ENCODE measurements at regions of chr5 and their contacts with region 1.

Region 1: DNA sequence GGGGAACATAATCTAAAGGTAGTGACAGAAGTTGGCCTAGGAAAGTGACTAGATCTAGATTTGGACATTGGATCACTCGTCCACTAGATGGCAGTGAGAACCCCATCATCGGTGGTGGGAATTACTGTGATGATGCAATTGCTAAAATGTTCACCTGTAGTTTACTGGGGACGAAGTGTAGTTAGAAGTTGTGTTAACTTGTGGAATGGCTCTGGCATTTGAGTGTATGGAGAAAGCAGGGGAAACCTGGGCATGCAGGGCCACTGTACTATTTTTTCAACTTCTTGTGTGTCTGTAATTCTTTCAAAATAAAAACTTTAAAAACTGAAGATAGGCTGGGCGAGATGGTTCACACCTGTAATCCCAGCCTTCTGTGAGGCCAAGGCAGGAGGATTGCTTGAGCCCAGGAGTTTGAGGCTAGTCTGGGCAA is 75.5 kb downstream of the PHAX start:
- DNase-seq: peak; percentile 72
- H3K4me3 ChIP-seq: no peak overlapping the region
- H3K27ac ChIP-seq: no peak overlapping the region
- H3K4me1 ChIP-seq: peaks cover 14% of the 10 kb centered on the region
- H3K27me3 ChIP-seq: no peaks in the 10 kb centered on the region
- CTCF ChIP-seq: peak; percentile 87

Region 2: DNA sequence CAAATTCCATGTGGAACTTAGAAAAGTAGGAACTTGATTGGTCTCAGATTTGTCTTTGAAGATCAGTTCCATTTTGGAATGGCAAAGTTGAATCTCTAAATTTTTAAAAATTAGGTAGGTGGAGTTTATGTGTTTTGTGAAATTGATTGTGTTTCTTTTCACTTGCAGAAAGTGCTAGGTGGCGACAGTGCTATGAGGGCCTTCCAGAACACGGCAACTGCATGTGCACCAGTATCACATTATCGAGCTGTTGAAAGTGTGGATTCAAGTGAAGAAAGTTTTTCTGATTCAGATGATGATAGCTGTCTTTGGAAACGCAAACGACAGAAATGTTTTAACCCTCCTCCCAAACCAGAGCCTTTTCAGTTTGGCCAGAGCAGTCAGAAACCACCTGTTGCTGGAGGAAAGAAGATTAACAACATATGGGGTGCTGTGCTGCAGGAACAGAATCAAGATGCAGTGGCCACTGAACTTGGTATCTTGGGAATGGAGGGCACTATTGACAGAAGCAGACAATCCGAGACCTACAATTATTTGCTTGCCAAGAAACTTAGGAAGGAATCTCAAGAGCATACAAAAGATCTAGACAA is 72.7 kb before region 1 on chr5:
- CTCF ChIA-PET with region 1: no interaction called
- POLR2A ChIA-PET with region 1: no interaction called
- intact Hi-C with region 1: no loop called
- DNase-seq: no peak
- H3K4me3 ChIP-seq: no peak overlapping the region
- H3K27ac ChIP-seq: no peak overlapping the region
- H3K4me1 ChIP-seq: peaks cover 7% of the 10 kb centered on the region
- H3K27me3 ChIP-seq: no peaks in the 10 kb centered on the region
- CTCF ChIP-seq: no peak

Region 3: DNA sequence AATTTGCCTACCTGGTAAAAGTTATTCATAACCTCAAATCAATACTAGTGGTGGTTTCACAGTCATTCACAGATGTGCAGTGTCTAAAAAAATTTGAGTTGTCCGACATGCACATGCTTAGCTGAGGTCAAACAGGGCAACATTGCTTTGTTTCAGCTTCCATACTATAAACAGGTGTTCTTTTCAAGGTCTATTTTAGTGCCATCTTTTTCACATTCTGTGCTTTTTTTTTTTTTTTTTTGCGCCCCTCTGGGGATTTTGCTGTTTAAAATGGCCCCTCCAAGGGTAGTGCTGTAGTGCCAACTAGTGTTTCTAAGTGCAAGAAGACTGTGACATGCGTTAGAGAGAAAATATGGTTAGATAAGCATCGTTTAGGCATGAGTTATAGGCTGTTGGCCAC is 60.9 kb before region 1 on chr5:
- CTCF ChIA-PET with region 1: no interaction called
- POLR2A ChIA-PET with region 1: no interaction called
- intact Hi-C with region 1: no loop called
- DNase-seq: no peak
- H3K4me3 ChIP-seq: no peak overlapping the region
- H3K27ac ChIP-seq: no peak overlapping the region
- H3K4me1 ChIP-seq: no peaks in the 10 kb centered on the region
- H3K27me3 ChIP-seq: no peaks in the 10 kb centered on the region
- CTCF ChIP-seq: no peak

Region 4: GRCh38 chr5:126736141-126736540 is 59.9 kb after region 1 on chr5:
- CTCF ChIA-PET with region 1: no interaction called
- POLR2A ChIA-PET with region 1: no interaction called
- intact Hi-C with region 1: no loop called
- DNase-seq: no peak
- H3K4me3 ChIP-seq: no peak overlapping the region
- H3K27ac ChIP-seq: no peak overlapping the region
- H3K4me1 ChIP-seq: no peaks in the 10 kb centered on the region
- H3K27me3 ChIP-seq: no peaks in the 10 kb centered on the region
- CTCF ChIP-seq: no peak

Region 5: DNA sequence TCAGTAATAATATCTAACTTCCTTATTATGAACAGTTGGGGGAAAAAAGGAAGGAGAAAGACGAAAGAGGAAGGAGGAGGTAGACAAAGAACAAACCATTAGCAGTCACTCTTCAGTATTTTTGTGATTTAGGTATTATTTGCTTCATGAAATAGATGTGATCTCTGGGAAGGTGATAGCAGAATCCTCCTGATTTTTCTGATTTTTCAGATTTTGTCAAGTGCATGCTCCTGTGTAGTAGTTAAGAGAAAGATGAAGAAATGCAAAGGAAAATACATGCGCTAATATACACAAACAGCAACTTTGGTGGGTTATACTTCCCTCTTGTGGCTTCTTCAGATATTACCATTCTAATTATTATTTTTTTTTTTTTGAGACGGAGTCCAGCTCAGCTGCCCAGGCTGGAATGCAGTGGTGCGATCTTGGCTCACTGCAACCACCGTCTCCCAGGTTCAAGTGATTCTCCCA is 132.3 kb after region 1 on chr5:
- CTCF ChIA-PET with region 1: interaction called, 3 read pairs
- POLR2A ChIA-PET with region 1: no interaction called
- intact Hi-C with region 1: loop called (anchors 2 kb)
- DNase-seq: peak; percentile 60
- H3K4me3 ChIP-seq: no peak overlapping the region
- H3K27ac ChIP-seq: no peak overlapping the region
- H3K4me1 ChIP-seq: peaks cover 18% of the 10 kb centered on the region
- H3K27me3 ChIP-seq: no peaks in the 10 kb centered on the region
- CTCF ChIP-seq: peak; percentile 54